ENCODE measurements at regions of chr9 and their contacts with region 1.

Region 1: DNA sequence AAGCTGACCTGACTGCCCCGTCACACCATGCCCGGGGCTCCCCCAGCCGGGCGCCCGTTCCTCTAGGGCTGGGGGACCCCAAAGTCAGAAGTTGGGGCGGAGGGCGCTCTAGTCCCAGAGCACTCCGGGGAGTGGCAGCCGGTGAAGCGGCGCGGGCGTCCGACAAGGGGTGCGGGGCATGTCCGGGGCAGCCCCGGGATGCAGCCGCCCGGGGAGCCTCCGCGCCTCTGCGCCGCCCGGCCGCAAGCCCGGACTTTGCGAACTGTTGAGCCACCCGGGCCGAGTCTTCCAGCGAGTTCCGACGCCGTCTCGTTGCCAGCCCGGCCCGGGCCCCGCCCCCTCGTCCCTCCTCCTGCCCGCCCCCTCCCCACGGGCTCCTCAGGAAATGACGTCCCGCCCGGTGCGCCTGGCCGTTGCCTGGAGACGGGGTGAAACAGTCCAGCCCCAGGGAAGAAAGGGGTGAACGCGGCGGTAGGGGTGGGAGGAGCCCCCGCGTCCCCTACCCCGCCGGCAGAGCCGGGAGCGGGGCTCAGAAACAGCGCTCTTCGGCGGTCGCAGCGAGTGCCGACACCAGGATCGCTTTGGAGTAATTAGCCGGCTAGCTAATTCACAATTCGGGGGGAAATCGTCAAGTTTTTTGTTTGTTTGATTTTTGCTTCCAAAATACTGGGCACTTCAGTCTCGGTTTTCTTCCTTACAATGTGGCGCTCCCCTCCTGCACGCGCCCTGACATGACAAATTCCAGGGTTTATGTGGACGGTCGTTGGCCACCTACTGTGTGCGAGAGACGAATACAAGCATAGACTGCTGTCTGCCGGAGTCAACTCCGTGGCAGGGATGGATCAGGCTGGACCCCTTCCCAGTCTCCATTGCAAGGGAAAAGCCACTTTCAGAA is at the start of gene WHRN:
- DNase-seq: peak; percentile 100
- H3K27ac ChIP-seq: peak within 1 kb of the TSS; percentile 72
- CTCF ChIP-seq: no peak

Region 2: GRCh38 chr9:114405294-114406034 is 100.0 kb before region 1 on chr9:
- CTCF ChIA-PET with region 1: interaction called, 74 read pairs
- POLR2A ChIA-PET with region 1: interaction called, 9 read pairs
- DNase-seq: peak; percentile 94
- H3K27ac ChIP-seq: peak overlapping the region; percentile 2; the same call in 1 of the 2 replicates
- CTCF ChIP-seq: peak; percentile 95

Region 3: GRCh38 chr9:114570742-114571141 is 65.3 kb after region 1 on chr9:
- CTCF ChIA-PET with region 1: no interaction called
- POLR2A ChIA-PET with region 1: no interaction called
- DNase-seq: no peak
- H3K27ac ChIP-seq: no peak overlapping the region
- CTCF ChIP-seq: no peak

Region 4: GRCh38 chr9:114587385-114588202 is 82.2 kb after region 1 on chr9 and contains the start of gene ATP6V1G1:
- CTCF ChIA-PET with region 1: interaction called, 16 read pairs
- POLR2A ChIA-PET with region 1: no interaction called
- DNase-seq: peak; percentile 100
- H3K27ac ChIP-seq: peak within 1 kb of the TSS; percentile 72
- CTCF ChIP-seq: no peak

Region 5: GRCh38 chr9:114606068-114606467 is 100.6 kb after region 1 on chr9:
- CTCF ChIA-PET with region 1: no interaction called
- POLR2A ChIA-PET with region 1: no interaction called
- DNase-seq: no peak
- H3K27ac ChIP-seq: no peak overlapping the region
- CTCF ChIP-seq: no peak

Measured in RWPE1 (cell line).